ENCODE measurements at regions of chr9 and their contacts with region 1.

Region 1: GRCh38 chr9:78261403-78262001 is 25.6 kb downstream of the CEP78 start:
- DNase-seq: peak in 1 of 4 donors; percentile 33
- ATAC-seq: peak; percentile 57
- H3K4me3 ChIP-seq: no peak overlapping the region
- H3K27ac ChIP-seq: no peak overlapping the region
- H3K4me1 ChIP-seq: no peaks in the 10 kb centered on the region
- H3K27me3 ChIP-seq: no peaks in the 10 kb centered on the region
- CTCF ChIP-seq: peak; percentile 52 to 77

Region 2: DNA sequence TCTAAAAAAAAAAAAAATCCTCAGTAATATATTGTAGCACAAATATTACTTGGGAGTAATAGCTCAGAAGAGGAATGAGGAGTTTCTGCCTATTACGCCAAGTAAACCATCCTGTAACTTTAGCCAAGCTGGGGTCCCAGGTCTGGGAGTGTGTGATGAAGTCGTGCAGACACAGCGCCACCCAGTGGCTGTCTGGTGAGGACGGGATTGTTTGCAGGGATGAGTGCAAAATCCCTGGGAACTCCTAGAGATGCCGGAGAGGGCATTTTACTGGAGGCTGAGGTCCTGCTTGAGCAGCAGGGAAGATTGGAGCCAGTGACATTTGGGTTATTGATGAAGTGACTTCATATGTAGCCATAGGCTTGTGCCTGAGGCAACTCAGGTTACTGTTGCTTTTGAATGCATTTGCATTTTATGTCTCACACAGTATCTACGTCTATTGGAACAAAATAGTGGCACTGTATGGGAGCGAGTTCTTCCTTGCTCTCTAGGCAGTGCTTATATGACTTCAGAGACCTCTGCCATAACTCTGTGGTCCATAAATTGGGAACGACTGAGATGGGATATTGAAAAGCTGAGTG is 108.2 kb after region 1 on chr9:
- intact Hi-C with region 1: loop called in 1 of 2 experiments (anchors 5 kb)
- DNase-seq: peak; percentile 59 to 87 (median 74)
- ATAC-seq: peak; percentile 91
- H3K4me3 ChIP-seq: no peak overlapping the region
- H3K27ac ChIP-seq: no peak overlapping the region
- H3K4me1 ChIP-seq: no peaks in the 10 kb centered on the region
- H3K27me3 ChIP-seq: peaks cover 0 to 37% of the 10 kb centered on the region in 2 donors
- CTCF ChIP-seq: peak; percentile 71 to 82

Region 3: DNA sequence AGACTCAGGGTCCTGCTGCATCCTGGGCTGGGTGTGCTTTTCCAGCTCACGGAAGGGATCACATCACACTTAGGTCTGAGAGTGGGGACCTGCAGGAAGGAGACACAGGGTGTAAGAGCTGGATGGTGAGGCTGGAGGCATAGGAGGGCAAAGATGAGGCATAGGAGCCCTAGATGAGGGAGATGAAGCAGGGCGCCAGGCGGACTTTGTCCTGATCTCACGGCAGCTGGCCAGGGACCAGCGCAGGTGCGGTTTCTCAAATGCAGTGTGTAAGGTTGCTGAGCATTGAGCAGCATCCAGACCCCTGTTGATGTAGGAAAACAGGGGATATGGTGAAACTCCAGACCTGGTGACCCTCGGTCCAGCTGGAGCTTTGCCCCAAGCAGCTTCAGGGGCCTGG is 191.9 kb after region 1 on chr9:
- intact Hi-C with region 1: no loop called
- DNase-seq: no peak
- ATAC-seq: no peak
- H3K4me3 ChIP-seq: no peak overlapping the region
- H3K27ac ChIP-seq: no peak overlapping the region
- H3K4me1 ChIP-seq: no peaks in the 10 kb centered on the region
- H3K27me3 ChIP-seq: peaks cover 0 to 7% of the 10 kb centered on the region in 2 donors
- CTCF ChIP-seq: no peak